Posterior vena cava (tissue), 2 donors: ENCODE measurements at regions of chr17 and their contacts with region 1.

Region 1: GRCh38 chr17:20095336-20096080 is 86.3 kb downstream of the SPECC1 start:
- DNase-seq: peak; percentile 91

Region 2: GRCh38 chr17:20009302-20010098 is 86.0 kb before region 1 on chr17 and contains the start of gene SPECC1:
- intact Hi-C with region 1: loop called in 1 of 2 experiments (anchors 5 kb)
- DNase-seq: peak; percentile 94
- total RNA-seq, gene SPECC1: 44.7 to 59.1 TPM

Region 3: DNA sequence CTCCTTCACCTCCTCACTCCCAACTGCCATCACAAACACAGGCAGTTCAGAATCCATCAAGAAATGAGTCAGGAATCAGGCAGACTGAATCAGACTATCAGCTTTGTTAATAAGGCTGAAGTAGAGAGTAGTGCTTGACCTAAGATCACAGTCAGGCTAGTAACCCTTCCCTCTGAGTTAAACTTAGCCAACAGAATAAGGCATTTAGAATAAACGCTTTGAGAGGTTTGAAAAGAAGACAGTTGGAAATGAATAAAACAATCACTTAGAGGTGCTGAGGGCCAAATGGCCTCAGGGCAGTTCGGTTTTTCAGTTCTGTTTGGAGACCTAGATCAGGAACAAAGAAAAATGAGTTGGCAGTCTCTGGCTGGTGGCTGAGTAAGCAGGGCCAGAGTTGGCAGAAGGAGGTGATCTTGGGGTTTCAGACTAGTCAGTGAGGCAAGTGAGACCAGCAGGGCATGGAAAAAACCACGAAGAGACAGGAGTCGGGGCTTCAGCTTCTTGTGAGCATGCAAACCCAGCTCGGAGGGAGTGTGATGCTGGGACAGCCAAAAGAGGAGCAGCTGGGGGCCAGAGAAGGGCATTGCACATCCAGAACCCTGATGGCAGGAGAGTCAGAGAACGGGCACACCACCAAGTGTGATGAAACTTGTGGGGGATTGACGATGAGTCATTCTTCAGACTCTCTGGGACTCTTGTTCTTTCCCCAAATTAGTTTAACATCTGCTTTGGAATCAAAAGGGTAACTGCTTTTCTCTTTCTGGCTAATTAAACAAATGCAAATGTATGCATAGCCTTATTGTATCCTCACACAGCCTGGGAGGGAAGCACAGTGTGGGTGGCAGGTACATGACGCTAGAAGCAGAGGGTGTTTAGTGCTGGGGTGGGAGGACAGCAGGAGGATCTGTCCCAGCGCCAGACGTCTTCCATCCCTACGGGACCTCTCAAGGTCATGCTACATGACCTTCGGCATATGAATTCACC is 31.6 kb before region 1 on chr17:
- intact Hi-C with region 1: no loop called
- DNase-seq: peak; percentile 95